Activated CD4-positive, alpha-beta memory T cell treated with anti-CD3 and anti-CD28 coated beads, Interleukin-2, amount 10 ng/mL, durations not matched to agents 7 days and 5 days (primary cell): ENCODE measurements at regions of chr3 and their contacts with region 1.

Region 1: DNA sequence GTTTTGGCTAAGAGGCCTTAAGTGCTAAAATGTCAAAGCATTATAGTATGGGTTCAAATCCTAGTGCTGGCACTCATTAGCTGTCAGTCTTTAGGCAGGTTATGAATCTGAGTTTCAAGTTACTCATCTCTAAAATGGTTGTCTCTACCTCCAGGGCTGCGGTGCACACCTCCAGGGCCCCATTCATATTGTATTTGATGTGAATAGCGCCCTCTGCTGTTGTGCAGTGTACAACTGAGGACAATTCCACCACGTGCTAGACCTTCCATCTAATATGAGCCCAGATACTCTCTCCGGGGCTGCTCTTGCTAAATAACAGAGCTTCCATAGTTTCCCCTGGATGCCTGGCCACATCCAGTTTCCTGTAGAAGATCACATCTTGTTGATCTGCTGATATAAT is 54.3 kb downstream of the OXNAD1 start:
- DNase-seq: peak; percentile 85
- H3K4me3 Mint-ChIP-seq: no peak overlapping the region
- H3K27ac Mint-ChIP-seq: peak overlapping the region; percentile 72
- H3K4me1 Mint-ChIP-seq: peaks cover 58% of the 10 kb centered on the region
- H3K27me3 Mint-ChIP-seq: no peaks in the 10 kb centered on the region

Region 2: DNA sequence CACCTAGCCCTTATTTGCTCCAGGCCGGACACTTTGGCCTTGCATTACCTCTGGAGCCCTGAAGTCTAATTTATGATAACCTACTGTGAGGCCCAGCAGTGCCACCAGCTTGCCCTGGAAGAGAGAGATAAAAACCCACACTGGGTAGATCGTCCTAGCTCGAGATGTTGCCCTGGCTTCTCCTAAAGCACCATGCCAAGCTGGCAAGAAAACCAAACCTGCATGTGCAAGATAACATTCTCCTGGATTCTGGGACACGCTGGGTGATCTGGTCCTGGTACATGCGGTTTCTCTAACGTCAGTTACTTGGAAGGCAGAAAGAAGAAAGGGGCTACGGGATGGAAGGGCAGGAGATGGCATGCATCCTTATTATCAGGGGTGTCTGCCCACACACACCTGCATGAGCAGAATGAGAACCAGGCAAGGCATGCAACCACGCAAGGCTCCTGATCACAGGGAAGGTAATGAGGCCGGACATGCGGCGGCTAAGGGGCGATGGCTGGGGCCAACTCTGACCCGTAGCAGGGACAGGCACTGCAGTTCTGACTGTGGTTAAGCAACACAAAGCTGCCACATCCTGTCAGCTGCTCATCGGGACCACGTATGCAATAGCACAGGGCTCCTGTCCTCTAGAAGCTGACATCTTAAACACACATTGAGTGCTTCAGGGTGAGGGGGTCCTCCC is 18.7 kb after region 1 on chr3:
- CTCF ChIA-PET with region 1: interaction called, 11 read pairs
- POLR2A ChIA-PET with region 1: interaction called, 5 read pairs
- DNase-seq: peak; percentile 76
- H3K4me3 Mint-ChIP-seq: peak overlapping the region; percentile 4
- H3K27ac Mint-ChIP-seq: peak overlapping the region; percentile 67
- H3K4me1 Mint-ChIP-seq: peaks cover 38% of the 10 kb centered on the region
- H3K27me3 Mint-ChIP-seq: no peaks in the 10 kb centered on the region

Region 3: DNA sequence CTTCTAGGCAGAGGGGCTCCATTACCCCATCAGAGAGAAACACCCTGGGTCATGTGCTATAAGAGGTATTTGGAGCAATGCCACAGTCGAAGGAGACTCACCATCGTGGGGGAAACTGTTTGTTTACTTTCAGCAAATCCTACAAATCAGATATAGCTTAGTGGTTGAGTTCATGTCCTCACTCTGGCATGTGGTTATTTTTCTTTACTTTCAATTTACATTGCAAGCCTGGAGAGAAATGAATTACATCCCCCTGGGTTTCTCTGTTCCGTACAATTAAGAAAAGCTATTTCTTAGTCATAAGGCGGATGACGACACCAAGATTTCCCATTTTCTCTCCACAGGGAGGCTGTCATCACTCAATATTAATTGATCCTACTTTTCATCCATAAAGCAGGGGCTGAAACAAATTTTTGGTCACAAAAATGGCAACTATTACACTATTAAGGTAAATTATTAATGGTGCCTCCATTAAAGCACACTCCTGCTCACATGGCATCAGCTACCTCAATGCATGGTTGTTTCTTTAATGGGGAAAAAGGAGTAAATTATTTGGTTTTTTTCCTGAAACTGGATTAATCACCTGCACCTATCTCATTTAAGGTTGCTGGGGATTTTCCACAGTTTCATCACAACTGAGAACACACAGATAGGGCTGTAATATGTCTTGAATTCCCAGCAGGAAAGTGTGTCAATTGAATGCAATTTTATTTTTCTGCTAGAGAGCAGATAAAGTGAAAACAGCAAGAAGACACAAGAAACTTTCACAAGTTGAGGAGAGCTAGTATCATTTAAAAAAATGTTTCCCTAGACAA is 157.5 kb after region 1 on chr3:
- CTCF ChIA-PET with region 1: no interaction called
- POLR2A ChIA-PET with region 1: no interaction called
- DNase-seq: no peak
- H3K4me3 Mint-ChIP-seq: no peak overlapping the region
- H3K27ac Mint-ChIP-seq: peak overlapping the region; percentile 21
- H3K4me1 Mint-ChIP-seq: peaks cover 46% of the 10 kb centered on the region
- H3K27me3 Mint-ChIP-seq: no peaks in the 10 kb centered on the region